ENCODE measurements at regions of chr11 and their contacts with region 1.

Region 1: GRCh38 chr11:128302425-128303186 is 284.8 kb downstream of the ETS1 start:
- DNase-seq: peak; percentile 80
- ATAC-seq: peak; percentile 90
- H3K4me3 Mint-ChIP-seq: peak overlapping the region; percentile 85
- H3K27ac Mint-ChIP-seq: peak overlapping the region; percentile 90
- H3K4me1 Mint-ChIP-seq: peaks cover 79% of the 10 kb centered on the region
- H3K27me3 Mint-ChIP-seq: no peaks in the 10 kb centered on the region
- CTCF ChIP-seq: peak; percentile 14

Region 2: GRCh38 chr11:128488471-128488870 is 185.9 kb after region 1 on chr11:
- CTCF ChIA-PET with region 1: interaction called, 3 read pairs
- POLR2A ChIA-PET with region 1: interaction called, 12 read pairs
- intact Hi-C with region 1: no loop called
- DNase-seq: peak; percentile 69
- ATAC-seq: peak; percentile 63
- H3K4me3 Mint-ChIP-seq: peak overlapping the region; percentile 47
- H3K27ac Mint-ChIP-seq: peak overlapping the region; percentile 98
- H3K4me1 Mint-ChIP-seq: peaks cover 94% of the 10 kb centered on the region
- H3K27me3 Mint-ChIP-seq: no peaks in the 10 kb centered on the region
- CTCF ChIP-seq: no peak